OCI-LY7 (cell line): ENCODE measurements at regions of chr5 and their contacts with region 1.

Region 1: DNA sequence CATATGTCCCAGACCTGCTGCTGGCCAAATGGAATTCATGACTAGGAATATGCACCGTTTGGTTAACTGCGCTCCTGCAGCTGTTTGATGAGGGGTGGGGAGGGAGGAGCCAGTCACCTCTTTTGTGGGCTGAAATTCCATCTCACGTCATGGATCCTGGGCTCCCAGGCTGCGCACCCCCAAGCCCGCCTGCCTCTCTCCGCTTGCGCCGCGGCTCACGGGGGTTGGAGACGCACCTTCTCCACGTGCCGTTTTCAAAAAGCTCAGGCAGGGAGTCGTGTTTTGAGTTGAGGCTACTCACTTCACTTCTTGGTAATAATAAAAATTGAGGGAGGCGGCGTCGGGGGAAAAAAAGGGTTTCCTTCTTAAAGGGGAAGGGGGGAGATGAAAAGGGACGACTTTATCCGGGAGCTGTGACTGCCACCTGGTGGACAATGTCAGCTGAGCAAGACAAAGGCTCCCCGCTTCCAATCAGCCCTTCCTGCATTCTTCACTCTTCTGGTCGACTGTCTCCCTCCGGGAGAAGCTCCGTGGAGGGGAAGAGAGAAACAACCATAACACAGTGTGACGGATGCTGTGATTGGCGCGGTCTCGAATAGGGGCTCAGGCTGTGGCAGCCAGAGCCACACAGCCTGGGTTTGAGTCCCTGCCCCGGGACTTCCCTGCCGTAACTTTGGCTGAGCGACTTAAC is 15.9 kb upstream of the C5orf47 start:
- DNase-seq: peak; percentile 85
- H3K4me3 ChIP-seq: peak overlapping the region; percentile 51
- H3K27ac ChIP-seq: no peak overlapping the region
- H3K4me1 ChIP-seq: peaks cover 29% of the 10 kb centered on the region
- CTCF ChIP-seq: peak; percentile 95

Region 2: GRCh38 chr5:173789031-173789920 is 183.8 kb before region 1 on chr5:
- CTCF ChIA-PET with region 1: no interaction called
- POLR2A ChIA-PET with region 1: no interaction called
- intact Hi-C with region 1: loop called (anchors 2 kb)
- DNase-seq: peak; percentile 31
- H3K4me3 ChIP-seq: no peak overlapping the region
- H3K27ac ChIP-seq: no peak overlapping the region
- H3K4me1 ChIP-seq: peaks cover 63% of the 10 kb centered on the region
- CTCF ChIP-seq: no peak

Region 3: GRCh38 chr5:173823711-173824528 is 149.2 kb before region 1 on chr5:
- CTCF ChIA-PET with region 1: no interaction called
- POLR2A ChIA-PET with region 1: interaction called, 5 read pairs
- intact Hi-C with region 1: loop called (anchors 1 kb)
- DNase-seq: no peak
- H3K4me3 ChIP-seq: peak overlapping the region; percentile 27
- H3K27ac ChIP-seq: peak overlapping the region; percentile 99
- H3K4me1 ChIP-seq: peaks cover 84% of the 10 kb centered on the region
- CTCF ChIP-seq: no peak

Region 4: DNA sequence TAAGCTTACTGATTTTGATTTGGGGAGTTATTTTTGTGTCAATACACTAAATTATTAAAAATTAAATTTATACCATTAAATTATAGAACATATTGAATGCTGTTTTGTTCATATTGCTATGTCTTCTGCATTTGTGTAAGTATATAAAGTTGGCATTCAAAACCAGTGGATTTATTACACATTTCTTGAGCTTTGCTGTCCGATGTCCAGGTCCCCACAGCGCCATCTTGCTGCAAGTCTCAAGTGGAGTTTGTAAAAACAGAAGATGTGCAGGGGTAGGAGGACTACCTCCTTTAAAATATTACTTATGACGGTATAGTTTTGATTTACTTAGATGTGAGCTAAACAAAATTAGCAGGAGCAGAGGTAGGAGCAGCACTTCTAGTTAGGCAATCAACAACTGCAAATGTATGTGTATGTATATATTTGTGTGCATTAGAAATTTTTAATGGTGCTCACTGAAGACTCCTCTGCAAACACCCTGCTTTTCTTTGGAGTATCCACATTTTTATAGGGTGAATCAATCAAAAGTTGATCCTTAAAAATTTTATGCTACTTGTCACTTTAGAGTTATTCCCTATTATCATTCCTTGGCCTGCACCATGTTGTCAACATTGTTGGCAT is 47.5 kb before region 1 on chr5:
- CTCF ChIA-PET with region 1: interaction called, 6 read pairs
- POLR2A ChIA-PET with region 1: no interaction called
- intact Hi-C with region 1: loop called (anchors 5 kb)
- DNase-seq: peak; percentile 72
- H3K4me3 ChIP-seq: no peak overlapping the region
- H3K27ac ChIP-seq: peak overlapping the region; percentile 24
- H3K4me1 ChIP-seq: peaks cover 59% of the 10 kb centered on the region
- CTCF ChIP-seq: peak; percentile 95

Region 5: GRCh38 chr5:173962436-173962835 is 10.6 kb before region 1 on chr5:
- CTCF ChIA-PET with region 1: no interaction called
- POLR2A ChIA-PET with region 1: no interaction called
- intact Hi-C with region 1: no loop called
- DNase-seq: no peak
- H3K4me3 ChIP-seq: no peak overlapping the region
- H3K27ac ChIP-seq: no peak overlapping the region
- H3K4me1 ChIP-seq: no peaks in the 10 kb centered on the region
- CTCF ChIP-seq: no peak